H1 (cell line): ENCODE measurements at regions of chr11 and their contacts with region 1.

Region 1: GRCh38 chr11:14907411-14908213 is 15.6 kb upstream of the CYP2R1 start:
- DNase-seq: peak in 1 of 2 experiments; percentile 94
- H3K4me3 ChIP-seq: no peak overlapping the region
- H3K27ac ChIP-seq: no peak overlapping the region
- H3K4me1 ChIP-seq: peaks cover 0 to 11% (median under 1%) of the 10 kb centered on the region in 4 experiments; a peak in 4 of 7 replicates
- H3K27me3 ChIP-seq: peaks cover 0 to 7% (median 0%) of the 10 kb centered on the region in 4 experiments; a peak in 3 of 7 replicates
- CTCF ChIP-seq: peak; percentile 78 to 86 (median 80)
- EP300 ChIP-seq: no peak
- POLR2A ChIP-seq: no peak
- RAD21 ChIP-seq: peak; percentile 57 to 60

Region 2: DNA sequence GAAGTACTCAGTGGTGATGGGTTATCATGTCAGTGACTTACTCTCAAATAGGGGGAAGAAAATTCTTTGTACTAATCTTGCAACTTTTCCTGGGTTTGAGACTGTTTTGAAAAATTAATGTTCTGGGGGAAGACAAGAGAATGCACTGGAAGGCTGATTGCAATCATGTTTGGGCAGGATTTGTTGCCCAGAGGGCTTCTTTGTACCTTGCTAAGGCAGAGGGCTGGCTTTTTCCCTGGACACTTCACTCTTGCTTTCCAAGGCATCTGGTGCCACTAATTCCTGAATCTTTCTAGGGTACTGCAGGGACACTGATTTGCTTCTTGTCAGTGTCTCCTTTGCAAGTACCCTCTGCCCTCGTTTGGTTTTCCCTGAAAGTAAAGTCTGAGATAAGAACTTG is 509.3 kb before region 1 on chr11:
- CTCF ChIA-PET with region 1: no interaction called
- POLR2A ChIA-PET with region 1: no interaction called
- DNase-seq: no peak
- H3K4me3 ChIP-seq: no peak overlapping the region
- H3K27ac ChIP-seq: no peak overlapping the region
- H3K4me1 ChIP-seq: no peaks in the 10 kb centered on the region
- H3K27me3 ChIP-seq: no peaks in the 10 kb centered on the region
- CTCF ChIP-seq: no peak
- EP300 ChIP-seq: no peak
- POLR2A ChIP-seq: no peak
- RAD21 ChIP-seq: no peak

Region 3: DNA sequence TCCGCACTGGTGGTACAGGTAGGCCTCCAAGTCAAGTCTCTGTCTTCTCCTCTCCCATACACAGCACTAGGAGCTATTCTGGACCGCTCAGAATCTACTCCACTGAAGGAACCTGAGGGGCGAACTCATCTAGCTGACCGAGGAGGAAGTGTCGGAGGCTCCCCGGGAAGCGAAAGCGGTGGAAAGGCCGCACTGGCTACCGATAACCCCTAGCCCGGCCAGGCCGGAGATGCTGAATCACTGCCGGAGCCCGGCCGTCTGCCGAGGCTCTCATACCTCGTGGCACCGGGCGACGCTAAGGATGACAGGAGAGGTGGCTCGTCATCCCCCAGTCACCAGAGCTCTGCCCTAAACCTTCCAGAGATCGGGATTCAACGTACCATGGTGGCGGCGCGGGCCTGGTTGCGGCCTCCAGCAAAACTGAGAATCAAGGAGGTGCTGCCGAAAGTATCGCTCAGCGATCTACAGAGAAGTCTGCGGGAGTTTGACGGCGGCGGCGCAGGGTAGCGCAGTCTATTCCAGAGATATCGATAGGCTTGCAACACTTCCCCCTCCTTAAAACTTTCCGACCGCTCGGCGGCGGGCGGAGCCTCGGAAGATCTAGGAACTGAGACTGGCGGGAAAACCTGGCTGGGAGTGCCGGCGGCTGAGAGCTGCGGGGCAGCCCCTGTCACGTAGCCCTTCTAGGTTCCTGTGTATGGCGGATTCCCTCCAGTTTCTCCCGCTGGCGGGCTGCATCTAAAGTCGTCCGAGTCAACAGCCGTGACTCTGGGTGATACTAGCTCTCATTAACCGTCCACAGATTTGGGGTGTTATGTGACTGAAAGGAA is 387.5 kb before region 1 on chr11 and contains the start of gene PSMA1:
- CTCF ChIA-PET with region 1: interaction called, 11 read pairs
- POLR2A ChIA-PET with region 1: no interaction called
- DNase-seq: peak; percentile 91
- H3K4me3 ChIP-seq: peak within 1 kb of the TSS; percentile 90 to 100 (median 100)
- H3K27ac ChIP-seq: peak within 1 kb of the TSS; percentile 74
- H3K4me1 ChIP-seq: peaks cover 0 to 2% (median 0%) of the 10 kb centered on the region in 4 experiments; a peak in 2 of 7 replicates
- H3K27me3 ChIP-seq: no peaks in the 10 kb centered on the region
- CTCF ChIP-seq: no peak
- EP300 ChIP-seq: peak in 1 of 2 experiments; percentile 96; a peak in 2 of 3 replicates
- POLR2A ChIP-seq: peak; percentile 46 to 88
- RAD21 ChIP-seq: peak; percentile 18 to 23; a peak in 3 of 4 replicates
- total RNA-seq, gene PSMA1: 148 and 150 TPM in 2 replicates

Region 4: GRCh38 chr11:14789879-14790484 is 117.6 kb before region 1 on chr11:
- CTCF ChIA-PET with region 1: interaction called, 65 read pairs
- POLR2A ChIA-PET with region 1: no interaction called
- DNase-seq: no peak
- H3K4me3 ChIP-seq: no peak overlapping the region
- H3K27ac ChIP-seq: no peak overlapping the region
- H3K4me1 ChIP-seq: no peaks in the 10 kb centered on the region
- H3K27me3 ChIP-seq: no peaks in the 10 kb centered on the region
- CTCF ChIP-seq: no peak; a peak in 1 of 4 replicates
- EP300 ChIP-seq: no peak
- POLR2A ChIP-seq: no peak
- RAD21 ChIP-seq: peak in 1 of 2 experiments; percentile 22; a peak in 1 of 4 replicates

Region 5: DNA sequence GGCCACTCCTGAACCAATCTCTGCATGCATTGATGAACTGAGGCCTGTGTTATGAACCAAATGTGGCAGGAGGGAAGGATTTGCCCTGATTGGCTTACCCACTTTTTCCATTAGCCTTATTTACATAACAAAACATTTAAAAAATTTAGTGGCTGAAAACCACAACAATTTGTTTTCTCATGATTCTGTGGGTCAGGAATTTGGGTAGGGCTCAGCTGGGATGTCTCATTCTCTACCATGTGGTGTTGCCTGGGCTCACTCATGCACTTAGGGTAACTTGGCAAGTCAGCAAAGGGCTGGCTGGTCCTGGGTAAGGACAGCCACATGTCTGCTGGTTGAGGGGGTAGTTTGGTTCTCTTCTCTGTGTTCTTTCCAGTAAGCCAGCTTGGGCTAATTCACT is 19.5 kb after region 1 on chr11:
- CTCF ChIA-PET with region 1: interaction called, 85 read pairs
- POLR2A ChIA-PET with region 1: no interaction called
- DNase-seq: no peak
- H3K4me3 ChIP-seq: no peak overlapping the region
- H3K27ac ChIP-seq: no peak overlapping the region
- H3K4me1 ChIP-seq: no peaks in the 10 kb centered on the region
- H3K27me3 ChIP-seq: no peaks in the 10 kb centered on the region
- CTCF ChIP-seq: no peak
- EP300 ChIP-seq: no peak
- POLR2A ChIP-seq: no peak
- RAD21 ChIP-seq: no peak

Region 6: DNA sequence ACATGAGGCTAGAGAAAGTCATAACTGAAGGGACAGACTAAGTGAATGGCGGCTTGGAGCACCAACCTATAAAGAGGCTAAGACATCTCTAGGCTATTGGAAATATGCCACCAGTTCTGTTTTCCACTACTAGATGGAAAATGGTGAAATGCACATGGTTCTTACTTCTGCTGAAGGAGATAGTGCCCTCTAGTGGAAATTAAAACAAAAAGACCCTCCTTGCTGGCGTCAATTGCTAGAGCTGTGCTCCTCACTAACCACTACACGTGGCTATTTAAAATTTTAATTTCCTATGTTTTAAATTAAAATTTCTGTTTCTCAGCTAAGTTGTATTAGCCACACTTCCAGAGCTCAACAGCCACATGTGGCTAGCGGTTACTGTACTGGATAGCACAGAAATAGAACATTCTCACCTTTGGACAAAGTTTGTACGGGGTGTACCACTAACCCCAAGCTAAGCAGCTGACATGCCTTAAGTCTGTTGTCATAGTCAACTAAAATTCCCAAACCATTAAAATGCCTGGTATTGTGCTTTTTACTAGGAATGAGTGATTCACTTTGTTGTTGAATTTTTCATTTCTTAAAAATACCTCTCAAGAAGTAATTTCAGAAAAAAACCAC is 98.6 kb after region 1 on chr11:
- CTCF ChIA-PET with region 1: interaction called, 69 read pairs
- POLR2A ChIA-PET with region 1: no interaction called
- DNase-seq: no peak
- H3K4me3 ChIP-seq: no peak overlapping the region
- H3K27ac ChIP-seq: no peak overlapping the region
- H3K4me1 ChIP-seq: no peaks in the 10 kb centered on the region
- H3K27me3 ChIP-seq: no peaks in the 10 kb centered on the region
- CTCF ChIP-seq: peak in 2 of 3 experiments; percentile 65 to 69; a peak in 3 of 4 replicates
- EP300 ChIP-seq: no peak
- POLR2A ChIP-seq: no peak
- RAD21 ChIP-seq: peak; percentile 73 to 78

Region 7: GRCh38 chr11:15113381-15113780 is 205.8 kb after region 1 on chr11:
- CTCF ChIA-PET with region 1: interaction called, 18 read pairs
- POLR2A ChIA-PET with region 1: no interaction called
- DNase-seq: no peak
- H3K4me3 ChIP-seq: no peak overlapping the region
- H3K27ac ChIP-seq: no peak overlapping the region
- H3K4me1 ChIP-seq: peaks cover 0 to 3% (median under 1%) of the 10 kb centered on the region in 4 experiments; a peak in 1 of 7 replicates
- H3K27me3 ChIP-seq: peaks cover 1 to 26% (median 18%) of the 10 kb centered on the region in 4 experiments; a peak in 6 of 7 replicates
- CTCF ChIP-seq: no peak
- EP300 ChIP-seq: no peak
- POLR2A ChIP-seq: no peak
- RAD21 ChIP-seq: no peak